B cell (primary cell): ENCODE measurements at regions of chr12 and their contacts with region 1.

Region 1: DNA sequence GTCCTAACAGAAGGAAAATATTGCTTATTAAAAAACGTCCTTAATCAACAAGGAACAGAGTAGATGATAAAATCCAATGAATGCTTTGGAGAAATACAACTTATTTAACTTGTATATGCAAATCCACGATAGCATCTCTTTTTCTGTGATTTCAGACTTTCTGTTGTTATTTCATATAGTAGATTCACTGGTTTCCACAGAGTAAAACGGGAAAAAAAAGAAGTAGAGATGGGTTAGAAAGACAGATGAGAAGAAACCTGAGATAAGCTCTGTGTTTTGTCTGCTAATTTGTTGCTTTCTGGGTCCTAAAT is 447.7 kb downstream of the RERGL start:
- DNase-seq: no peak
- ATAC-seq: no peak
- H3K4me3 ChIP-seq: no peak overlapping the region
- H3K4me3 Mint-ChIP-seq: no peak overlapping the region
- H3K27ac ChIP-seq: no peak overlapping the region
- H3K27ac Mint-ChIP-seq: no peak overlapping the region
- H3K4me1 ChIP-seq: peaks cover 2 to 4% of the 10 kb centered on the region in 2 donors
- H3K4me1 Mint-ChIP-seq: peaks cover 3% of the 10 kb centered on the region
- H3K27me3 ChIP-seq: no peaks in the 10 kb centered on the region
- H3K27me3 Mint-ChIP-seq: no peaks in the 10 kb centered on the region
- CTCF ChIP-seq: peak; percentile 62

Region 2: GRCh38 chr12:15979096-15980092 is 1662.9 kb before region 1 on chr12:
- CTCF ChIA-PET with region 1: no interaction called
- POLR2A ChIA-PET with region 1: no interaction called
- intact Hi-C with region 1: loop called (anchors 10 kb)
- DNase-seq: no peak
- ATAC-seq: no peak
- H3K4me3 ChIP-seq: no peak overlapping the region
- H3K4me3 Mint-ChIP-seq: no peak overlapping the region
- H3K27ac ChIP-seq: no peak overlapping the region
- H3K27ac Mint-ChIP-seq: no peak overlapping the region
- H3K4me1 ChIP-seq: no peaks in the 10 kb centered on the region
- H3K4me1 Mint-ChIP-seq: peaks cover 5% of the 10 kb centered on the region
- H3K27me3 ChIP-seq: no peaks in the 10 kb centered on the region
- H3K27me3 Mint-ChIP-seq: no peaks in the 10 kb centered on the region
- CTCF ChIP-seq: peak; percentile 60

Region 3: DNA sequence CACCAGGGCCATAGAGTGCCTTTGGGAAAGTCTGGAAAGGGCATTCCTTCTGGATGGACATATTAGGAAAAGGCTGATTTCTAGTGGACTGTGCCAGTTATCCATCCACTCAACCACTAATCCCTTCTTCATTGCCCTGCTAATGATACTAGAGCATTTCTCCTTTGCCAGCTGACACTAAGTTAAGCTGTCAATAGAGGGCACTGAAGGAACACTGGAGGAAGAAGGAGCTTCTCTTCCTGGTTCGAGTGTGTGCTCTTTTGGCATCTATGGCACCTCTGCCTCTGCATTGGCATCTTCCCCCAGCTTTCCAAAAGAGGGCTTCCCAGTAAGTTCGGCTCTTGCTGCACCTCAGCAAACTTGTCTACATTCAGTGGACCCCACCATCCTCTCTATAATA is 1565.7 kb before region 1 on chr12:
- CTCF ChIA-PET with region 1: no interaction called
- POLR2A ChIA-PET with region 1: no interaction called
- intact Hi-C with region 1: loop called (anchors 5 kb)
- DNase-seq: peak; percentile 7
- ATAC-seq: no peak
- H3K4me3 ChIP-seq: no peak overlapping the region
- H3K4me3 Mint-ChIP-seq: no peak overlapping the region
- H3K27ac ChIP-seq: no peak overlapping the region
- H3K27ac Mint-ChIP-seq: no peak overlapping the region
- H3K4me1 ChIP-seq: no peaks in the 10 kb centered on the region
- H3K4me1 Mint-ChIP-seq: no peaks in the 10 kb centered on the region
- H3K27me3 ChIP-seq: no peaks in the 10 kb centered on the region
- H3K27me3 Mint-ChIP-seq: peaks cover 8% of the 10 kb centered on the region
- CTCF ChIP-seq: no peak